ENCODE measurements at regions of chr3 and their contacts with region 1.

Region 1: DNA sequence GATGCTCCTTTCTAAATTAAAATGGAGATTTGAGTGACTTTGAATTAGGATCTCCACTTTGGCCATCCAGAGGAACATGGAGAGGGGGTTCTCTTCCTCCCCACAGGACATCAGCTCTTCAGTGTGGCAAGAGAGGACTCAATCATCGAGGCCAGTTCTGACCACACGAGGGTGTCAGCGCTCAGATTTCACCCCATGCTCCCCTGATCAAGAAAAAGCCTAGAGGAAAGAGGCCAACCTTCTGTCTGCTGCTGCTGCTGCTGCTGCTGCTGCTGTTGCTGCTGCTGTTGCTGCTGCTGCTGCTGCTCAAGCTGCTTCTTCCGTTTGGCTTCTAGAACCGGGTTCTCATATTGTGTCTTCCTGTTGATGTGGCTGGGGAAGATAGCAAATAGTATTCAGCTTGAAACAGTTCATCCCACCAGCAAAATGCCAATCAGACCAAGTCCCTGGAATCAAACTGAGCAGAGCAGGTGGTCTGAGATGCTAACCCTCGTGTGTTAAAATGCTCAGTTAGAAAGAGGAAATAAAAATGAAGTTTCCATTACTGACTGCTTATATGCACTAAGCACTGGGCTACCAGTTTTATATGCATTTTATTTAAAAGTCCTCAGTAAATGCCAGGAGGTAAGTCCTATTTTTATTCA is 599.0 kb downstream of the MAGI1 start:
- DNase-seq: peak; percentile 49
- H3K4me3 ChIP-seq: no peak overlapping the region
- H3K27ac ChIP-seq: no peak overlapping the region
- H3K27me3 ChIP-seq: no peaks in the 10 kb centered on the region
- CTCF ChIP-seq: peak; percentile 81

Region 2: GRCh38 chr3:65425880-65426279 is 13.9 kb before region 1 on chr3:
- CTCF ChIA-PET with region 1: interaction called, 51 read pairs
- POLR2A ChIA-PET with region 1: no interaction called
- DNase-seq: no peak
- H3K4me3 ChIP-seq: no peak overlapping the region
- H3K27ac ChIP-seq: no peak overlapping the region
- H3K27me3 ChIP-seq: no peaks in the 10 kb centered on the region
- CTCF ChIP-seq: peak; percentile 73

Region 3: DNA sequence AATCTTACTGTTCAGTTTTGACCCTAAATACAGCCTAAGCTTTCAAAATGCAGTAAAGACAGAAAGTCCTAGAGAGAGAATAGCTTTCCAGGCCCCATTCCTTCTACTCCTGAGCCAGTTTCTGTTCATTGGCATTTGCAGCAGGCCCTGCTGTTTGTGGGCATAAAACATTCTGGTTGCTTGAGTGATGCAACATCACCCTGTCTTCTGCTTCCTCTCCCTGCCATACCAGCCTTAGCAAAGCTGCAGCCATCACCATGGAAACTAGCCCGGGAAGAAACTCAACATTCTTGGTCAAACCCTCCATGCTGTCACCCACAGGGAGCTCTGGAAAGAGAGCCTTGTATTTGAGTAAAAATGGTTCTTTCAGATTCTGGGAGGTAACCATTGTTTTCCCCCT is 273.3 kb after region 1 on chr3:
- CTCF ChIA-PET with region 1: interaction called, 11 read pairs
- POLR2A ChIA-PET with region 1: no interaction called
- DNase-seq: peak; percentile 21
- H3K4me3 ChIP-seq: no peak overlapping the region
- H3K27ac ChIP-seq: no peak overlapping the region
- H3K27me3 ChIP-seq: no peaks in the 10 kb centered on the region
- CTCF ChIP-seq: no peak

Region 4: GRCh38 chr3:65742914-65743313 is 303.2 kb after region 1 on chr3:
- CTCF ChIA-PET with region 1: interaction called, 111 read pairs
- POLR2A ChIA-PET with region 1: no interaction called
- DNase-seq: no peak
- H3K4me3 ChIP-seq: no peak overlapping the region
- H3K27ac ChIP-seq: no peak overlapping the region
- H3K27me3 ChIP-seq: no peaks in the 10 kb centered on the region
- CTCF ChIP-seq: no peak

Region 5: DNA sequence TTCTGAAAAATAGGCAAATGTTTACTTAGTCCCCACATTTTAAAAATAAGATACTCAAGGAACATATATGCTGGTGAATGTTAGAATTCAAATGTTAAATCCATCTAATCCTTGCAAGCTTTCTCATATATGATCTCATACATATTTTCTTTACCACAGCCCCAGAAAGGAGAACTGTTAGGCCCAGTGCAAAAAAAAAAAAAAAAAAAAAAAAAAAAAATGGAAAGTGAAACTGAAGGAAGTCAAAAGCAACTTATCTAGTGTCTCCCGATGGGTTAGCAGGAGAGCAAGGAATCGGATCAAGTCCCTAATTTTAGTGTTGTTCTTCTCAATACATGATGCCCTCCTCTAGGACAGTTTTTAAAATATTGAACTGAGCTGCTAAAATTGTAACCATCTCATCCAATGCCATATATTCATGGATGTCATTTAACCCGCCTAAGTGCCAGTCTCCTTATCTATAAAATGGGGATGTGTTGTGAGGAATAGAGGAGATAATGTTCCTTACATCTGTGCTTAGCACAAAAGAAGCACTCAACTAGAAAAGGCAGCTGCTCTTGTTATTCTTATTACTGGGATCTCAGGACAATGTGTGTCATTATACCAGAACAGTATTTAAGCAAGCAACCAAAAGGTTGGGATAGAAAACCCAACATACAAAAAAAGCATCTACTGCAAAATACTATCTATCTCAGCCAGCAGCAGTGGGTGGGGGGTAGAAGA is 319.3 kb after region 1 on chr3:
- CTCF ChIA-PET with region 1: interaction called, 17 read pairs
- POLR2A ChIA-PET with region 1: no interaction called
- DNase-seq: no peak
- H3K4me3 ChIP-seq: peak overlapping the region; percentile 43
- H3K27ac ChIP-seq: no peak overlapping the region
- H3K27me3 ChIP-seq: no peaks in the 10 kb centered on the region
- CTCF ChIP-seq: no peak

Measured in AG04450 (cell line).